Naive thymus-derived CD4-positive, alpha-beta T cell (primary cell): ENCODE measurements at regions of chr4 and their contacts with region 1.

Region 1: DNA sequence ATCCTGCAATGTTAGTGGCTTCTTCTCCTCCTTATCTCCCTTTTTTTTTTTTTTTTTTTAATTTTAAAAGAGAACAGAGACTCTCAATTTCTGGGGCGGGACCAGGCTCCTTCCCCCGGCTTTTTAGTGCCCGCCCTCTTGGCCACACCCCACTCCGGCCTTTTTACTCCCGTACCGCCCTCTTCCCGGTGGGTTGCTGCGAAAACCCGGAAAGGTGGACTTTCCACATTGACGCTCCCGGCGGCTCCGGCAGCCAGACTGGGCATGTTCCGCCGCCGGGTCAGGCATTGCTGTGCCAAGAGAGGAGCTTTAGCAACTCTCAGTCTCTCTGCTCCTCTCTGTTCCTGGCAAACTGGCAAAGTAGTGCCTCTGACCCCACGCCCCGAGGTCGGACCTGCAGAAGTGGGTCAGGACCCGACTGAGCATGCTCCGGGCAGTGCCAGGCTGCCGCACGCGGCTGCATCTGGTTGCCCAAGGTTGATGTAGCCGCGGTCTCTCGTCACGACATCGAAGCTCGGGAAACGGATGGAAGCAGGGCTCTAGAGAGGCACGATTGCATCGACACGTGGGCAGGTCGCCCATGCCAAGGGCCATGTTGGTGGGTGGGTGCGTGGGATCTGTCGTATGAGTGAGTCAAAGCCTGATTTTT is 1.1 kb upstream of the MFAP3L start:
- DNase-seq: peak; percentile 76 to 92 (median 89)
- ATAC-seq: peak; percentile 83
- H3K4me3 ChIP-seq: peak overlapping the region; percentile 71
- H3K4me3 Mint-ChIP-seq: peak overlapping the region; percentile 86 to 96 (median 94)
- H3K27ac ChIP-seq: peak overlapping the region; percentile 59
- H3K27ac Mint-ChIP-seq: peak overlapping the region; percentile 65 to 89 (median 81)
- H3K4me1 ChIP-seq: peaks cover 0 to 7% of the 10 kb centered on the region in 2 donors
- H3K4me1 Mint-ChIP-seq: peaks cover 6 to 14% (median 11%) of the 10 kb centered on the region in 7 donors
- H3K27me3 ChIP-seq: no peaks in the 10 kb centered on the region
- H3K27me3 Mint-ChIP-seq: peaks cover 0 to 60% (median 8%) of the 10 kb centered on the region in 5 donors

Region 2: GRCh38 chr4:168480931-168481611 is 1546.2 kb before region 1 on chr4:
- CTCF ChIA-PET with region 1: no interaction called
- POLR2A ChIA-PET with region 1: no interaction called
- intact Hi-C with region 1: loop called in 1 of 2 experiments (anchors 2 kb)
- DNase-seq: peak in 8 of 9 donors; percentile 22 to 85 (median 78)
- ATAC-seq: peak; percentile 75
- H3K4me3 ChIP-seq: peak overlapping the region; percentile 72
- H3K4me3 Mint-ChIP-seq: peak overlapping the region; percentile 88 to 100 (median 98)
- H3K27ac ChIP-seq: peak overlapping the region; percentile 95
- H3K27ac Mint-ChIP-seq: peak overlapping the region; percentile 98 to 100 (median 99)
- H3K4me1 ChIP-seq: peaks cover 20 to 33% of the 10 kb centered on the region in 2 donors
- H3K4me1 Mint-ChIP-seq: peaks cover 46 to 82% (median 74%) of the 10 kb centered on the region in 7 donors
- H3K27me3 ChIP-seq: no peaks in the 10 kb centered on the region
- H3K27me3 Mint-ChIP-seq: no peaks in the 10 kb centered on the region

Region 3: DNA sequence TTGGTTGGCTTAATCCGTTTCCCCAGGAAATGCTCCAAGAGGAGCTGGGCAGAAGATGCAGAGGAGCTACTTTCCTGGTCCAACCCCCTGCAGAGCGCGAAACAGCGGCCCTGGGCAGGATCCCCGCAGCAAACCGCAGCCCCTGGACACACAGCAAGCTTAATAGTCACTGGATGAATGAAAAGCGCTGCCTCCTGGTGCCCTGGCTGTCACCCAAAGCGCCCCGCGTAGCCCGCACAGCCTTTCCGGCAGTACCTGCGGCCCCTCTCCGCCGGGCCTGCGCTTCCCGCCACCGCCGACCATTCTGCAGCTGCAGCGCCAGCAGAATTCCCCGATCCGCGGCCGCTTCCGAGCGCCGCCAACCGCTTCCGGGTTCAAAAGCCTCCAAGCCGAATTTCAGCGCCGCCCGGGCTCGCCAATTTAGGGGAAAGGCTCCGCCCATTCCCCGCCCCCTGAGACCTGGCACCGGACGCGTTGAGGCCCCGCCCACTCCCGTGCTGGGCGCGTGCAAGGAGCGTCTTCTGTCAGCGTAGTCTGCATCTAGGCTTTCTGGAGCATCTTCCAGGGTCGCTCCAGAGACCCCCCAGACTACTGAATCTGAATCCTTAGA is 269.6 kb before region 1 on chr4 and contains the start of gene HPF1:
- CTCF ChIA-PET with region 1: no interaction called
- POLR2A ChIA-PET with region 1: no interaction called
- intact Hi-C with region 1: loop called (anchors 1 kb)
- DNase-seq: peak; percentile 84 to 93 (median 89)
- ATAC-seq: peak; percentile 98
- H3K4me3 ChIP-seq: peak within 1 kb of the TSS; percentile 83
- H3K4me3 Mint-ChIP-seq: peak within 1 kb of the TSS; percentile 82 to 92 (median 88)
- H3K27ac ChIP-seq: peak within 1 kb of the TSS; percentile 66
- H3K27ac Mint-ChIP-seq: peak within 1 kb of the TSS; percentile 52 to 81 (median 71)
- H3K4me1 ChIP-seq: peaks cover 0 to 7% of the 10 kb centered on the region in 2 donors
- H3K4me1 Mint-ChIP-seq: peaks cover 19 to 38% (median 30%) of the 10 kb centered on the region in 7 donors
- H3K27me3 ChIP-seq: no peaks in the 10 kb centered on the region
- H3K27me3 Mint-ChIP-seq: peaks cover 0 to 22% (median 0%) of the 10 kb centered on the region in 5 donors
- total RNA-seq, gene HPF1: 9.9 to 23.5 (median 13.8) TPM

Region 4: GRCh38 chr4:170047771-170048354 is 20.6 kb after region 1 on chr4:
- CTCF ChIA-PET with region 1: interaction called, 5 read pairs
- POLR2A ChIA-PET with region 1: no interaction called
- intact Hi-C with region 1: loop called in 1 of 2 experiments (anchors 2 kb)
- DNase-seq: peak; percentile 10 to 68 (median 51)
- ATAC-seq: peak; percentile 48
- H3K4me3 ChIP-seq: no peak overlapping the region
- H3K4me3 Mint-ChIP-seq: no peak overlapping the region
- H3K27ac ChIP-seq: no peak overlapping the region
- H3K27ac Mint-ChIP-seq: peak overlapping the region in 1 of 9 donors; percentile 77
- H3K4me1 ChIP-seq: no peaks in the 10 kb centered on the region
- H3K4me1 Mint-ChIP-seq: no peaks in the 10 kb centered on the region
- H3K27me3 ChIP-seq: no peaks in the 10 kb centered on the region
- H3K27me3 Mint-ChIP-seq: peaks cover 0 to 3% (median 0%) of the 10 kb centered on the region in 5 donors

Region 5: DNA sequence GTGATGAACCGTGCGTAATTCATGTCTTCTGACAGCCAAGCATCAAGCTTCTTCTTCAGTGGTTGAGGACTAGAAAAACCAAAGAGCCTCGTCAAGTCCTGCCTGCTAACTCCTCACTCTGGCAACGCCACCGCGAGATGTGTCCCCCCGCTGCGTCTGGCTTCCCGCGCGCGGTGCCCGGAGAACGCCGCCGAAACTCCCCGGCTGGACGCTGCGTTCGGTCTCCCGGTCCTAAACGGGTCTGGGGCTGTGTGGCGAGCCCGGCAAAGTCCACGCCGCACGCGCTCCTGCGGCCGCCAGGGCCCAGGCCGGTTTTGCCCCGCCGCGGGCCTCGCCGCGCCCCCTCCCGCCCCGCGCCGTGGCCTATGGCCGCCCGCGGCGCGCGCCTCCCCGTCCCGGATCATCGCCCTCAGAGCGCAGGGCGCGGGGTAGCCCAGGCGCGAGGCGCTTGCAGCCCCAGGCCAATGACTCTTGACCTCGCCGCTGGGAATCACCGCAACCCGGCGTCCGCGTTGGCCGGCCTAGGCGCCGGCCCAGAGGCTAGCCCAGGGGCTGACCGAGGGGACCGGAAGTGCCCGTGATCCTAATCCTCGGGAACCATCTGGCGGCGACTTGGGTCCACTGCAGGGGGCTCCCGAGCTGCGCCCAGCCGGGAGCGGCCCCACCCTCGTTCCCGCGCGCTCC is 62.5 kb after region 1 on chr4 and contains the start of gene AADAT:
- CTCF ChIA-PET with region 1: no interaction called
- POLR2A ChIA-PET with region 1: no interaction called
- intact Hi-C with region 1: no loop called
- DNase-seq: peak in 1 of 9 donors; percentile 24
- ATAC-seq: peak; percentile 24
- H3K4me3 ChIP-seq: no peak within 1 kb of the TSS
- H3K4me3 Mint-ChIP-seq: peak within 1 kb of the TSS; percentile 51 to 80 (median 66)
- H3K27ac ChIP-seq: no peak within 1 kb of the TSS
- H3K27ac Mint-ChIP-seq: no peak within 1 kb of the TSS
- H3K4me1 ChIP-seq: no peaks in the 10 kb centered on the region
- H3K4me1 Mint-ChIP-seq: peaks cover 6 to 17% (median 11%) of the 10 kb centered on the region in 7 donors
- H3K27me3 ChIP-seq: no peaks in the 10 kb centered on the region
- H3K27me3 Mint-ChIP-seq: peaks cover 30 to 60% (median 51%) of the 10 kb centered on the region in 5 donors
- total RNA-seq, gene AADAT: not detected